Activated CD8-positive, alpha-beta T cell treated with anti-CD3 and anti-CD28 coated beads for 36 hours (primary cell): ENCODE measurements at regions of chr12 and their contacts with region 1.

Region 1: GRCh38 chr12:96375841-96376604 is 24.2 kb downstream of the CDK17 start:
- DNase-seq: no peak
- ATAC-seq: no peak
- H3K4me3 Mint-ChIP-seq: no peak overlapping the region
- H3K27ac Mint-ChIP-seq: peak overlapping the region; percentile 91
- H3K4me1 Mint-ChIP-seq: peaks cover 68% of the 10 kb centered on the region
- H3K27me3 Mint-ChIP-seq: no peaks in the 10 kb centered on the region
- CTCF ChIP-seq: no peak

Region 2: DNA sequence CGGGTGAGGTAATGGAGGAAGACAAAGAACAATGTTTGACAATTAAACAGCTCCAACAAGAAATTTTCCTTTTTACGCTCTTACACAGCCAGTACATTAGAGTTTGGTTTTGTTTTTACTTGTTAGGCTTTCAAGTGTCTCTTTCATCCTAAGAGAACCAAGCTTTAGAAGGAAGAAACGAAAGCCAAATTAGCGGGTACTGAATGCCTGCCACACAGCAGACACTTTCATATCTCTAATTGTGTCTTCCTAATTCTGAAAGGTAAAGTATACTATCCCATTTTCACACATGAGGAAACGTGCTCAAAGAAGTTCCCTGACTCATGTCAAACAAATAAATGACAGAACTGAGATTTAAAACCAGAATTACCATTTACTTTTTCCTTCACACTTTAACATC is 40.8 kb before region 1 on chr12:
- CTCF ChIA-PET with region 1: no interaction called
- POLR2A ChIA-PET with region 1: no interaction called
- intact Hi-C with region 1: loop called (anchors 5 kb)
- DNase-seq: no peak
- ATAC-seq: peak; percentile 76
- H3K4me3 Mint-ChIP-seq: peak overlapping the region; percentile 52
- H3K27ac Mint-ChIP-seq: peak overlapping the region; percentile 58
- H3K4me1 Mint-ChIP-seq: peaks cover 43% of the 10 kb centered on the region
- H3K27me3 Mint-ChIP-seq: no peaks in the 10 kb centered on the region
- CTCF ChIP-seq: no peak

Region 3: GRCh38 chr12:96359328-96359727 is 16.7 kb before region 1 on chr12:
- CTCF ChIA-PET with region 1: interaction called, 17 read pairs
- POLR2A ChIA-PET with region 1: interaction called, 3 read pairs
- intact Hi-C with region 1: no loop called
- DNase-seq: no peak
- ATAC-seq: no peak
- H3K4me3 Mint-ChIP-seq: no peak overlapping the region
- H3K27ac Mint-ChIP-seq: no peak overlapping the region
- H3K4me1 Mint-ChIP-seq: peaks cover 68% of the 10 kb centered on the region
- H3K27me3 Mint-ChIP-seq: no peaks in the 10 kb centered on the region
- CTCF ChIP-seq: peak; percentile 16

Region 4: GRCh38 chr12:96409731-96410130 is 33.7 kb after region 1 on chr12:
- CTCF ChIA-PET with region 1: no interaction called
- POLR2A ChIA-PET with region 1: no interaction called
- intact Hi-C with region 1: no loop called
- DNase-seq: no peak
- ATAC-seq: no peak
- H3K4me3 Mint-ChIP-seq: no peak overlapping the region
- H3K27ac Mint-ChIP-seq: no peak overlapping the region
- H3K4me1 Mint-ChIP-seq: no peaks in the 10 kb centered on the region
- H3K27me3 Mint-ChIP-seq: no peaks in the 10 kb centered on the region
- CTCF ChIP-seq: no peak